ENCODE measurements at regions of chr6 and their contacts with region 1.

Region 1: GRCh38 chr6:12289933-12290820 is at the start of gene EDN1:
- DNase-seq: peak; percentile 51
- ATAC-seq: peak; percentile 84
- H3K4me3 ChIP-seq: peak within 1 kb of the TSS; percentile 88
- H3K27ac ChIP-seq: peak within 1 kb of the TSS; percentile 54
- H3K4me1 ChIP-seq: peaks cover 8% of the 10 kb centered on the region
- H3K27me3 ChIP-seq: no peaks in the 10 kb centered on the region
- CTCF ChIP-seq: peak; percentile 51 to 66 (median 55)
- EP300 ChIP-seq: no peak; a peak in 1 of 4 replicates
- POLR2A ChIP-seq: peak; percentile 57; the same call in 1 of the 2 replicates
- RAD21 ChIP-seq: peak; percentile 50
- polyA plus RNA-seq, gene EDN1: 2.0 to 2.5 TPM

Region 2: GRCh38 chr6:11659757-11660156 is 630.4 kb before region 1 on chr6:
- CTCF ChIA-PET with region 1: interaction called, 205 read pairs
- POLR2A ChIA-PET with region 1: interaction called, 15 read pairs
- RAD21 ChIA-PET with region 1: interaction called, 111 read pairs
- SMC1A ChIA-PET with region 1: interaction called, 141 read pairs
- in situ Hi-C with region 1: loop called (anchors 5 kb)
- intact Hi-C with region 1: loop called (anchors 1 kb)
- DNase-seq: no peak
- ATAC-seq: peak; percentile 48
- H3K4me3 ChIP-seq: no peak overlapping the region
- H3K27ac ChIP-seq: peak overlapping the region; percentile 25; the same call in 1 of the 2 replicates
- H3K4me1 ChIP-seq: peaks cover 20% of the 10 kb centered on the region
- H3K27me3 ChIP-seq: no peaks in the 10 kb centered on the region
- CTCF ChIP-seq: no peak
- EP300 ChIP-seq: no peak
- POLR2A ChIP-seq: no peak
- RAD21 ChIP-seq: no peak

Region 3: GRCh38 chr6:11824986-11825385 is 465.2 kb before region 1 on chr6:
- CTCF ChIA-PET with region 1: interaction called, 3 read pairs
- POLR2A ChIA-PET with region 1: no interaction called
- RAD21 ChIA-PET with region 1: interaction called, 7 read pairs
- SMC1A ChIA-PET with region 1: interaction called, 7 read pairs
- in situ Hi-C with region 1: no loop called
- intact Hi-C with region 1: loop called (anchors 10 kb)
- DNase-seq: peak; percentile 91
- ATAC-seq: peak; percentile 86
- H3K4me3 ChIP-seq: no peak overlapping the region
- H3K27ac ChIP-seq: peak overlapping the region; percentile 70
- H3K4me1 ChIP-seq: peaks cover 47% of the 10 kb centered on the region
- H3K27me3 ChIP-seq: no peaks in the 10 kb centered on the region
- CTCF ChIP-seq: no peak
- EP300 ChIP-seq: peak; percentile 90; a peak in 3 of 4 replicates
- POLR2A ChIP-seq: no peak
- RAD21 ChIP-seq: peak; percentile 14

Region 4: DNA sequence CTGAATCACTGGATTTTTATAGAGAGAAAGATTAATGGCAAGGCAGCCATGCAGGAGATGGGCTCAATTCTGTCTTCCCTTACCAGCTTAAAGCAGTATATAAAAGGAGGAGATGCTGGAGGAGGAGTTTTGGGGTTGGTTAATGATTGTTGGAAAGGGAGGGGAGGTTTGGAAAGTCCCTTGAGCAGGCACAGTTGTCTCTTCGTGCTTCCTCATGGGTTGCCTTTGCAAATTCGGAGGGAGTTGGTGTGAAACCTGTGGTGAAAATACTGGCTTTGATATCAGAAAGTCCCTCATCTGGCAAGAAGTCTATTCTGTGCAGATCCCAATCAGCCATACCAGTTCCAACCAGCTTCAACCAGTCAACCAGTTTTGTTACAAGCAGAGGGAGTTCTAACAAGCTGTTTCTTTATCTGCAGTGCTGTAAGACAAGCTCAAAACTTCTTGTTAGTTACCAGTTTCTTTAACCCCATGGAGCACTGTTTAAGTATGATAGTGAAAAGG is 171.0 kb before region 1 on chr6:
- CTCF ChIA-PET with region 1: no interaction called
- POLR2A ChIA-PET with region 1: no interaction called
- RAD21 ChIA-PET with region 1: interaction called, 11 read pairs
- SMC1A ChIA-PET with region 1: no interaction called
- in situ Hi-C with region 1: no loop called
- intact Hi-C with region 1: loop called (anchors 5 kb)
- DNase-seq: peak; percentile 97
- ATAC-seq: peak; percentile 83
- H3K4me3 ChIP-seq: peak overlapping the region; percentile 34; the same call in 1 of the 2 replicates
- H3K27ac ChIP-seq: peak overlapping the region; percentile 92
- H3K4me1 ChIP-seq: peaks cover 34% of the 10 kb centered on the region
- H3K27me3 ChIP-seq: no peaks in the 10 kb centered on the region
- CTCF ChIP-seq: no peak
- EP300 ChIP-seq: peak; percentile 82 to 90; a peak in 3 of 4 replicates
- POLR2A ChIP-seq: no peak
- RAD21 ChIP-seq: no peak

Region 5: DNA sequence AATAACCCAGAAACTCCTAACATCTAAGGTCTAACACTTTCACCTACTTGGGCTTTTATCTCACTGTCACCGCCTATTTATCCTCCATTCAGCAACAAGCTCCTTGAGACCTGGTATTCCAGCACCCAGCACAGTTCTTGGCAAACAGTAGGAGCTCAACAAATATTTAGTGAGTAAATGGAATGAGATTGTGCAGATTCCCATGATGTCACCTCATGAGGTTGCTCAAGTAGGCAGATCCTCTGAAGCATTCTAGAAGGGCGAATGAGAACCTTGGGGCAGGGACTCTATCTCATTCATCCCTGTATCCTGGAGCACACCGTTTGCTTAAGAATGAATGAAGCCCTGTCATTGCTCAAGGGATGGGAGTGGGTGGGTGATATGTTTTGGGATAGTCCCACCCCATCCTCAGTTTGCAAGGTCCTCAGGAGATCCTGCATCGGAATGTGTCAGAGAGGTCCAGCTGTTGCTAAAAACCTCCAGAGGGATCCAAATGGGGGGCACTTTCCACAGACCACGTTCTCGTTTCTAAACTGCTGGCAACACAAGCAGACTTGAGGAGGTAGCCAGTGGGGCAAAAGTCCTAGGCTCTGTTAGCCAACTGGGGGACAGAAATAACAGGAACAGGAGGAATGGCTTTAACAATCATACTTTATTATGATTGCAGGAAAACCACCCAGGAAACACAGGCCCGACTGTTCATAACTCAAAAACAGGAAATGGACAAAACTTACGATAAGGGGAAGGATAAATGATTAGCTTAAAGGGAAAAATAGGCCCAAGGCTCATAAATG is 42.0 kb after region 1 on chr6:
- CTCF ChIA-PET with region 1: interaction called, 19 read pairs
- POLR2A ChIA-PET with region 1: interaction called, 11 read pairs
- RAD21 ChIA-PET with region 1: interaction called, 54 read pairs
- SMC1A ChIA-PET with region 1: interaction called, 97 read pairs
- in situ Hi-C with region 1: no loop called
- intact Hi-C with region 1: loop called (anchors 2 kb)
- DNase-seq: no peak
- ATAC-seq: no peak
- H3K4me3 ChIP-seq: no peak overlapping the region
- H3K27ac ChIP-seq: no peak overlapping the region
- H3K4me1 ChIP-seq: peaks cover 21% of the 10 kb centered on the region
- H3K27me3 ChIP-seq: no peaks in the 10 kb centered on the region
- CTCF ChIP-seq: no peak
- EP300 ChIP-seq: no peak
- POLR2A ChIP-seq: no peak
- RAD21 ChIP-seq: no peak

Region 6: GRCh38 chr6:12504319-12504966 is 214.3 kb after region 1 on chr6:
- CTCF ChIA-PET with region 1: interaction called, 90 read pairs
- POLR2A ChIA-PET with region 1: interaction called, 3 read pairs
- RAD21 ChIA-PET with region 1: interaction called, 73 read pairs
- SMC1A ChIA-PET with region 1: interaction called, 51 read pairs
- in situ Hi-C with region 1: no loop called
- intact Hi-C with region 1: loop called (anchors 1 kb)
- DNase-seq: peak; percentile 32
- ATAC-seq: peak; percentile 99
- H3K4me3 ChIP-seq: no peak overlapping the region
- H3K27ac ChIP-seq: no peak overlapping the region
- H3K4me1 ChIP-seq: no peaks in the 10 kb centered on the region
- H3K27me3 ChIP-seq: no peaks in the 10 kb centered on the region
- CTCF ChIP-seq: peak; percentile 58 to 76 (median 68)
- EP300 ChIP-seq: no peak
- POLR2A ChIP-seq: no peak
- RAD21 ChIP-seq: peak; percentile 65

Measured in GM12878 (cell line).